Heart left ventricle (tissue), 16 donors: ENCODE measurements at regions of chrX and their contacts with region 1.

Region 1: DNA sequence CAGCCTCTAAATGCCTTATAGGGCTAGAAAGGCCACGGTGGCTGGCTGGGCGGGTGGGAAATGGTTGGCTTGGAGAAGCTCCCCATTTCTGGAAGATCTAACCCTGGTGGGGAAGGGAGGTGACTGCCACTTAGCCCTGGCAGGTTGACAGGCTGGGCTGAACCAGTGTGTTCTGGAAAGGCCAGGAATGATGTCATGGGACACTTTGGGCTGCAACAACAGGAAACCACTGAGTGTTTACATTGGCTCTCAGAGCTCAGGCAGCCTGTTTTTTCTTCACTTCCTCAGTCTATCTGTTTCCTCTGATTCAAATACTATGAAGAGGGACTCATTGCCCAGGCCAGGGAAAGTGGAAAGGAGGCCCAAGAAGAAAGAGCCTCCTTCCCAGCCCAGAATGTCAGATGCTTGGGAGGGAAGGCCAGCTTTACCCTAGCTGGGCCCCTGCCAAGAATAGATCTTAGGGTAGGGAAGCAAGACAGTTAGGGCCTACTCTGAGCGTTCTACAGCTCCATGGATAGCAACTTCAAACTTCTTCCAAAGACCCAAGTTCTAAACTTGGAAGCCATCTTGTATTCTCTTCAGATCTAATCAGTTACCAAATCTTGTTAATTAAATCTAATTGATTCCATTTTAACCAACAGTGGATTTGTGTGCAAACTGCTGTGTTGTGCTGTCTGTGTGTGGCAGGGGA is 65.8 kb upstream of the MSN start:
- DNase-seq: peak; percentile 83 to 92 (median 89)
- ATAC-seq: peak; percentile 93 to 98 (median 96)
- H3K4me3 ChIP-seq: no peak overlapping the region
- H3K27ac ChIP-seq: peak overlapping the region; percentile 69 to 95 (median 84)
- H3K4me1 ChIP-seq: peaks cover 0 to 52% (median 23%) of the 10 kb centered on the region in 12 donors
- H3K27me3 ChIP-seq: no peaks in the 10 kb centered on the region
- CTCF ChIP-seq: peak in 1 of 12 donors; percentile 36
- POLR2A ChIP-seq: no peak

Region 2: DNA sequence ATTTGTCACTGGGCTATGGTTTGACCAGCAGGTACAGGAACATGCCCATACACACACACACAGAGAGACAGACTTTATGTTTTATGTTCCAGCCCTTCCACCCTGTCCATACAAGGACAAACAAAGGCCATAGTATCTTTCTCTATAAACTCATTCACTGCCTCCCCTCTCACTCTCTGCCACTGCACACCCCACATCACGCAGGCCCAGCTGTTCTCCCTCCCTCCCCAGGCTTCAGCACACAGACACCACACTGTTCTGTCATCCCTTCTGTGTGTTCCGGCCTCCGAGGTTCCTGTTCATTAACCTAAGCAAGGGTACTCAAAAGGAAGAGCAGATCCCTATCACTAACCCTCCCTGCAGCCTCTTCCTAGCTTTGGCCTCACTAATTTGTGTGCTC is 84.9 kb before region 1 on chrX:
- intact Hi-C with region 1: no loop called
- DNase-seq: no peak
- ATAC-seq: no peak
- H3K4me3 ChIP-seq: no peak overlapping the region
- H3K27ac ChIP-seq: no peak overlapping the region
- H3K4me1 ChIP-seq: no peaks in the 10 kb centered on the region
- H3K27me3 ChIP-seq: no peaks in the 10 kb centered on the region
- CTCF ChIP-seq: no peak
- POLR2A ChIP-seq: no peak

Region 3: DNA sequence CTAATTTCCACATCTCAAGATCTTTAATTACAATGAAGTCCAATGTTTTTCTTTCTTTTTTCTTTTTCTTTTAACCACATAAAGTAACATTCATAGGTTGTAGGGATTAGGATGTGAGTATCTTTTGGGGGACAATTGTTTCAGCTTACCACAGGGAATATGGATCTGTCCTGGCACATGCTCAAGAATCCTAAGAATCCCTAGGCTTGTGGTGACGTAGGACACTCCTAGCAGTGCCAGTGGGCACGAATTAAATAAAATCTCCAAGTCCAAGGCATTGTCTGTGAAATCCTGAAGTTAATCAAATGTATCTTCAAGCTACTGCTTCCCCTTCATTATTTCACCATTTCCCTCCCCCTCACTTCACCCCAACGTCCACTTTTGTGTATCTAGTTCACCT is 64.4 kb before region 1 on chrX:
- intact Hi-C with region 1: no loop called
- DNase-seq: no peak
- ATAC-seq: no peak
- H3K4me3 ChIP-seq: no peak overlapping the region
- H3K27ac ChIP-seq: no peak overlapping the region
- H3K4me1 ChIP-seq: peaks cover 0 to 13% (median 8%) of the 10 kb centered on the region in 12 donors
- H3K27me3 ChIP-seq: peaks cover 0 to 16% (median 0%) of the 10 kb centered on the region in 9 donors
- CTCF ChIP-seq: no peak
- POLR2A ChIP-seq: no peak

Region 4: DNA sequence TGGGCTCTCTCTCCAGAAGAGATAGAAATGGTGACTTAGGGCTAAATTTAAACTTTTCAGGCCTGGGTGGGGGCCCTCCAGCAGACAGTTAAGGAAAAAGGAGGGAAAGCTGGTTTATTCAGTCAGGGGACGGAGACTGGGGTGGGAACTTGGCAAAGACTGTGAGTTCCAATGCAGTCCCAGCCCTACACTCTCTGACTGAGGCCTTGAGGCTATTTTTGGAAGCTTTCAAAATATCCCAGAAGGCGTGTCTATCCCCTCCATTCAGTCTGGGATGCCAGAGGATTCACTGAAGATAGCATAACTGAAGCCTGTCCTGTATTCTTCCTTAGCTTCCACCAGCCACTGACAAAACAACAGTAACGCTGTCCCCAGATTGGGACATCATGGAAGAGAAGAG is 33.7 kb after region 1 on chrX:
- intact Hi-C with region 1: loop called in 6 of 10 experiments (anchors 1 to 5 kb)
- DNase-seq: peak in 4 of 5 donors; percentile 36 to 52 (median 44)
- ATAC-seq: peak; percentile 96 to 99 (median 96)
- H3K4me3 ChIP-seq: no peak overlapping the region
- H3K27ac ChIP-seq: peak overlapping the region; percentile 41 to 93 (median 75)
- H3K4me1 ChIP-seq: peaks cover 0 to 28% (median 16%) of the 10 kb centered on the region in 12 donors
- H3K27me3 ChIP-seq: no peaks in the 10 kb centered on the region
- CTCF ChIP-seq: no peak
- POLR2A ChIP-seq: no peak

Region 5: DNA sequence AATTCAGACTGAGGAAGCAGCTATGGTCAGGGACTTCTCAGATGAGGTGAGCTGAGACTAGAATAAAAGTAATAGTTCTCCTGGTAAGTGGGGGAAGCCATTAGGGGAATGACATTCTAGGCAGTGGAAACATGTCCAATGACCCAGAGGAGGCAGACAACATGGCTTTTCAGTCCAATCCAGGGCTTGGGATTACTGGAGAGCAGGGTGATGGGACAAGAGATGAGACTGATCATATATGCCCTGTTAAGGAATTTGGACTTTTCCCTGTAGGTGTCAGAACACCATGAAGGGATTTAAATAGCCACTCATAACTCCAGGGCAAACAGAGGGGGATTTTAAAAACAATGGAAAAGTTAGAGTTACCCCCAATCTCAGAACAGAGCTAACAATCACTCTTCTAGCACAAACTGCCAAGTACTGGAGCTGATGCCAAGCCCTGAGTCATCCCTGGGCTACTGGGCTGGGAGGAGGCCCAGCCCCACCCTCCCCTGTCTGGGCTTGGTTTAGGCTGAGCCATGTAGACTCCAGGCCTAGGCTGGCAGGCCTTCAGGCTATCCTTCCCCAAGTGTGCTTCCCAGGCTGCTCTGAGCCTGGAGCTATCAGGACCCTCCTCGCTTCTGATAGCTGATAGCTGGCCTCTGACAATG is 43.1 kb after region 1 on chrX:
- intact Hi-C with region 1: loop called in 5 of 10 experiments (anchors 5 kb)
- DNase-seq: peak; percentile 79 to 92 (median 85)
- ATAC-seq: peak; percentile 99 to 100 (median 99)
- H3K4me3 ChIP-seq: no peak overlapping the region
- H3K27ac ChIP-seq: peak overlapping the region; percentile 16 to 86 (median 72)
- H3K4me1 ChIP-seq: peaks cover 0 to 33% (median 21%) of the 10 kb centered on the region in 12 donors
- H3K27me3 ChIP-seq: peaks cover 0 to 2% (median 0%) of the 10 kb centered on the region in 9 donors
- CTCF ChIP-seq: no peak
- POLR2A ChIP-seq: no peak